IMR-90 (cell line): ENCODE measurements at regions of chr22 and their contacts with region 1.

Region 1: GRCh38 chr22:44550711-44551491 is 52.9 kb upstream of the RTL6 start:
- DNase-seq: peak; percentile 98
- ATAC-seq: peak; percentile 93
- H3K4me3 ChIP-seq: peak overlapping the region; percentile 35
- H3K27ac ChIP-seq: peak overlapping the region; percentile 90
- H3K4me1 ChIP-seq: peaks cover 8% of the 10 kb centered on the region; the same call in 1 of the 2 replicates
- H3K27me3 ChIP-seq: no peaks in the 10 kb centered on the region
- CTCF ChIP-seq: no peak
- POLR2A ChIP-seq: no peak
- RAD21 ChIP-seq: no peak; the same call in 1 of the 2 replicates

Region 2: GRCh38 chr22:44363272-44363979 is 187.5 kb before region 1 on chr22:
- CTCF ChIA-PET with region 1: no interaction called
- POLR2A ChIA-PET with region 1: no interaction called
- dilution Hi-C with region 1: no loop called
- in situ Hi-C with region 1: no loop called
- intact Hi-C with region 1: loop called (anchors 1 kb)
- DNase-seq: peak; percentile 98
- ATAC-seq: peak; percentile 79
- H3K4me3 ChIP-seq: no peak overlapping the region
- H3K27ac ChIP-seq: peak overlapping the region; percentile 96
- H3K4me1 ChIP-seq: peaks cover 48% of the 10 kb centered on the region
- H3K27me3 ChIP-seq: no peaks in the 10 kb centered on the region
- CTCF ChIP-seq: no peak
- POLR2A ChIP-seq: peak; percentile 81
- RAD21 ChIP-seq: peak; percentile 31; the same call in 1 of the 2 replicates

Region 3: DNA sequence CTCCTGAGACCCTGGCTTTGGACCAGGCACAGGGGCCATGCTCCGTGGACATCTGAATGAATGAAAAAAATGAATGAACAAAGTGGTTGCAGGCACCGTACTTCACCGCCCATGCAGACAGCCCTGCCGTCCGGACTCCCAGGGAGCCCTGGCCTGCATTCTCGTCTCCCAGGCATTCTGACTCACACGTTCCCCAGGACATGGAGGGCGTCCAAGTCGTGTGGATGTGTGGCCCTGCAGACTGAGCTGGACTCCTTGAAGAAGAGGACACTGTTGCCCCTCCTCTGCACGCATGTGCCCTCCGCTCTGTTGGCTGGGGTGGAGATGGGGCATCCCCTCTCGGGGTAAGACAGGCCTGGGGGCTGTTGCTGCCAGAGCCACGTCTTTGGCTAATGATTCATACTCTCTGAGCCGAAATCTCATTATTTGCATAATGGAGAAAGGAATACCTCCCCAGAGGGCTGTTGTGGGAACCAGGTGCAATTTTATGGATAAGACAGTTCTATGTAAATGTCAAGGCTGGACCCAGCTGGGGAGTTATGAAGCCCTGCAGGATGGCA is 102.5 kb before region 1 on chr22:
- CTCF ChIA-PET with region 1: no interaction called
- POLR2A ChIA-PET with region 1: no interaction called
- dilution Hi-C with region 1: no loop called
- in situ Hi-C with region 1: no loop called
- intact Hi-C with region 1: loop called (anchors 10 kb)
- DNase-seq: peak; percentile 94
- ATAC-seq: peak; percentile 88
- H3K4me3 ChIP-seq: no peak overlapping the region
- H3K27ac ChIP-seq: peak overlapping the region; percentile 73
- H3K4me1 ChIP-seq: peaks cover 20% of the 10 kb centered on the region
- H3K27me3 ChIP-seq: no peaks in the 10 kb centered on the region
- CTCF ChIP-seq: no peak
- POLR2A ChIP-seq: peak; percentile 63; the same call in 1 of the 2 replicates
- RAD21 ChIP-seq: peak; percentile 34

Region 4: DNA sequence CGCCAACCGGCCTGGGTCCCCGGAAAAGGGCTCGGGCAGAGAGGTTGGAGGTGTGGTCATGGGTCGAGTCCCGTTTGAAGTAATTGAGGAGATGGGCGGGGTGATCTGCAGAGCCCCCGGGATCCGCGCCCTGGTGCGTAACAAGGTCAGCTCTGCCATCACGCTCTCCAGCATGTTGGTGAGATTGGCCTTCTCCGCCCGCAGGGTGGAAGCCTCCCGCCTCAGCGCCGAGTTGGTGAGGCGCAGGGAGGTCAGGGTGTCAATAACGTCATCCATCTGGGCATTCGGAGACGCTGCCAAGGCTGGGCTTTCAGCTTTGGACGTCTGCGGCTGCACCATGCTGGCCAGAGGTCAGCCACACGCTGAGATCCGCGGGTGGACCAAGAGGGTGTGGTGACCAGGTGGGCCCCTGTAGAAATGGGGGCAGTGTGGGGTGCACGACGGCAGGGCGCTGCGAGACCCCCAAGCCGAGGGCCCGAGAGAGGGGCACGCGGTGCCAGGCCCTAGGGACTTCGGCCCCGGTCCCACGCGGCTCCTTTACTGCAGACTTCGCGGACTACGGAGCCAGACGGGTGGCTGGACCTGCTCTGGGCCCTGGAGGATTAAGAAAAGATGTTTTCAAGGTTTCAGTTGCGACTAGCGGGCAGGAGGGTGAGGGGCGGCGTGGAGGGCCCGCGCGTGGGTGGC is 53.5 kb before region 1 on chr22:
- CTCF ChIA-PET with region 1: no interaction called
- POLR2A ChIA-PET with region 1: no interaction called
- dilution Hi-C with region 1: no loop called
- in situ Hi-C with region 1: no loop called
- intact Hi-C with region 1: loop called (anchors 10 kb)
- DNase-seq: peak; percentile 34
- ATAC-seq: peak; percentile 6
- H3K4me3 ChIP-seq: peak overlapping the region; percentile 85
- H3K27ac ChIP-seq: peak overlapping the region; percentile 76
- H3K4me1 ChIP-seq: peaks cover 19% of the 10 kb centered on the region
- H3K27me3 ChIP-seq: no peaks in the 10 kb centered on the region
- CTCF ChIP-seq: no peak
- POLR2A ChIP-seq: no peak; the same call in 1 of the 2 replicates
- RAD21 ChIP-seq: 0 out of 2 replicates have a peak, but pooled peaks have one; percentile 1

Region 5: GRCh38 chr22:44523981-44524759 is 26.7 kb before region 1 on chr22:
- CTCF ChIA-PET with region 1: no interaction called
- POLR2A ChIA-PET with region 1: no interaction called
- dilution Hi-C with region 1: no loop called
- in situ Hi-C with region 1: no loop called
- intact Hi-C with region 1: loop called (anchors 1 kb)
- DNase-seq: peak; percentile 99
- ATAC-seq: peak; percentile 79
- H3K4me3 ChIP-seq: peak overlapping the region; percentile 9; the same call in 1 of the 2 replicates
- H3K27ac ChIP-seq: peak overlapping the region; percentile 94
- H3K4me1 ChIP-seq: peaks cover 21% of the 10 kb centered on the region
- H3K27me3 ChIP-seq: no peaks in the 10 kb centered on the region
- CTCF ChIP-seq: no peak
- POLR2A ChIP-seq: peak; percentile 78
- RAD21 ChIP-seq: peak; percentile 18; the same call in 1 of the 2 replicates

Region 6: DNA sequence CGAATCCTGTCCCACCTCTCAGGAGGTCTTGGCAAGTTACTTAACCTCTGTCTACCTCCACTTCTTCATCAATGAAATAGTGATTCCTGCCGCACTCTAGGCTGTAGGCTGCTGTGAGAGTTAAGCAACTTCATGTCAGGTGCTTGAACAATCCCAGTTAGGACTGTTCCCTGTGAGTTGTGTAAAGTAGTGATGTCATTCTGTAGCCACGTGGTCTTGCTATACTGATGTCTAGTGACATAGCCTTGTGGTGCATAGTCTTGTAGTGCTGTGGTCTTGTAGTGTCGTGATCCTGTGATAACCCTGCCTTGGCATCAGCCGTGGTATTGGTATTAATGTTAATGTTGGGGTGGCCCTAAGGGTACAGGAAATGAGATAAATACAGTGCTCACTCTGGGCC is 120.8 kb after region 1 on chr22:
- CTCF ChIA-PET with region 1: no interaction called
- POLR2A ChIA-PET with region 1: no interaction called
- dilution Hi-C with region 1: no loop called
- in situ Hi-C with region 1: no loop called
- intact Hi-C with region 1: no loop called
- DNase-seq: peak; percentile 83
- ATAC-seq: no peak
- H3K4me3 ChIP-seq: no peak overlapping the region
- H3K27ac ChIP-seq: no peak overlapping the region
- H3K4me1 ChIP-seq: peaks cover 17% of the 10 kb centered on the region; the same call in 1 of the 2 replicates
- H3K27me3 ChIP-seq: no peaks in the 10 kb centered on the region; the same call in 1 of the 2 replicates
- CTCF ChIP-seq: no peak
- POLR2A ChIP-seq: no peak
- RAD21 ChIP-seq: no peak

Region 7: DNA sequence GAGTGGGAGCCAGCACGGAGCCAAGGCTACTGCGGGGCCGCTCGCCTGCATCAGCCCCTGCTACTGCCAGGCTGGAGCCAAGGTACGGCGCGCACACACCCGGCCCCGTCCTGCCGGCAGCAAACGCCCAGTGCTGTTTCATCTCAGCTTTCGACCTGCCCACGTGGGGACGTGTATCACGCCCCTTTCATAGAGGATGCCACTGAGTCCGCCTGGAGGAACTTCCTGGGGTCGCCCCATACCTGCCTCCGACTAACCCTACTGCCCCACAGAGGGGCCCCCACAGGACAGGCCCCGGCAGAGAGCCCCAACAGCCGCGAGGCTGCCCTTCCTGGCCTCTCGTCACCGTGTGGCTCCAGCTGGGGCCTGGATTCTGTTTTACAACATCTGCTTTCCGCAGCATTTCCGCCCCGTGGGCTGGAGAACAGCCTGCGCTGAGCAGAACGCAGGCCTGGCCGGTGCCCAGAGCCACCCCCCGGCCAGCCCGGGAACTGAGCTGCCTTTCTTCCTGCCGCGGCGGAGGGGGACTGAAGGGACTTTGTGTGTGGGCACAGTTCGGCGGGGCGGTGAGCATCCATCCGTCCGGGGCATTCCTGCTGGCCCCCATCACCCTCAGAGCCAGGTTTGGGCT is 178.6 kb after region 1 on chr22:
- CTCF ChIA-PET with region 1: no interaction called
- POLR2A ChIA-PET with region 1: no interaction called
- dilution Hi-C with region 1: no loop called
- in situ Hi-C with region 1: no loop called
- intact Hi-C with region 1: loop called (anchors 5 kb)
- DNase-seq: peak; percentile 71
- ATAC-seq: peak; percentile 82
- H3K4me3 ChIP-seq: no peak overlapping the region
- H3K27ac ChIP-seq: peak overlapping the region; percentile 1; the same call in 1 of the 2 replicates
- H3K4me1 ChIP-seq: peaks cover 12% of the 10 kb centered on the region
- H3K27me3 ChIP-seq: no peaks in the 10 kb centered on the region
- CTCF ChIP-seq: peak; percentile 44
- POLR2A ChIP-seq: no peak
- RAD21 ChIP-seq: peak; percentile 53

Region 8: GRCh38 chr22:44819971-44820631 is 269.2 kb after region 1 on chr22:
- CTCF ChIA-PET with region 1: no interaction called
- POLR2A ChIA-PET with region 1: no interaction called
- dilution Hi-C with region 1: no loop called
- in situ Hi-C with region 1: no loop called
- intact Hi-C with region 1: no loop called
- DNase-seq: no peak
- ATAC-seq: no peak
- H3K4me3 ChIP-seq: no peak overlapping the region
- H3K27ac ChIP-seq: no peak overlapping the region
- H3K4me1 ChIP-seq: no peaks in the 10 kb centered on the region
- H3K27me3 ChIP-seq: peaks cover 24% of the 10 kb centered on the region
- CTCF ChIP-seq: no peak
- POLR2A ChIP-seq: no peak
- RAD21 ChIP-seq: no peak

Region 9: DNA sequence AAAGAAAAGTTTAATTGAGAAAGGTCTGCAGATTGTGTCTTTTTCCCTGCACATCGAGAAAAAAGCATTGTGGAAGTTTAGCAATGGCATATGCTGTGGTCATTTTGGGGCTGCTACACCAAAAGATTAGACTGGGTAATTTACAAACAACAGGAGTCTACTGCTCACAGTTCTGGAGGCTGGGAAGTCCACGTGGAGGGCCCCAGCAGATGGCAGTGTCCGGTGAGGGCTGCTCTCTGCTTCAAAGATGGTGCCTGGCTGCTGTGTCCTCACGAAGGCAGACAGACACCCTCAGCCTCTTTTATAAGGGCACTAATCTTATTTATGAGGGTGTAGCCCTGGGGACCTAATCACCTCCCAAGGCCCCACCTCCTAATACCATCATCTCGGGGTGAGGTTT is 437.8 kb after region 1 on chr22:
- CTCF ChIA-PET with region 1: no interaction called
- POLR2A ChIA-PET with region 1: no interaction called
- dilution Hi-C with region 1: no loop called
- in situ Hi-C with region 1: no loop called
- intact Hi-C with region 1: no loop called
- DNase-seq: no peak
- ATAC-seq: no peak
- H3K4me3 ChIP-seq: no peak overlapping the region
- H3K27ac ChIP-seq: no peak overlapping the region
- H3K4me1 ChIP-seq: no peaks in the 10 kb centered on the region
- H3K27me3 ChIP-seq: peaks cover 20% of the 10 kb centered on the region
- CTCF ChIP-seq: no peak
- POLR2A ChIP-seq: no peak
- RAD21 ChIP-seq: no peak